Esophagus squamous epithelium (tissue), 5 donors: ENCODE measurements at regions of chr12 and their contacts with region 1.

Region 1: GRCh38 chr12:51341259-51342007 is 5.0 kb downstream of the CELA1 start:
- DNase-seq: no peak
- H3K4me3 ChIP-seq: peak overlapping the region in 3 of 4 donors; percentile 15 to 45 (median 21)
- H3K27ac ChIP-seq: peak overlapping the region in 1 of 4 donors; percentile 31
- H3K4me1 ChIP-seq: peaks cover 0 to 19% (median 9%) of the 10 kb centered on the region in 3 donors
- H3K27me3 ChIP-seq: no peaks in the 10 kb centered on the region
- CTCF ChIP-seq: peak; percentile 95 to 99 (median 98)
- POLR2A ChIP-seq: no peak

Region 2: GRCh38 chr12:51047655-51048540 is 293.5 kb before region 1 on chr12 and contains the start of gene LETMD1:
- intact Hi-C with region 1: no loop called
- DNase-seq: peak; percentile 79
- H3K4me3 ChIP-seq: peak within 1 kb of the TSS; percentile 76 to 83 (median 80)
- H3K27ac ChIP-seq: peak within 1 kb of the TSS; percentile 92 to 99 (median 97)
- H3K4me1 ChIP-seq: peaks cover 6 to 32% (median 16%) of the 10 kb centered on the region in 3 donors
- H3K27me3 ChIP-seq: no peaks in the 10 kb centered on the region
- CTCF ChIP-seq: peak; percentile 77 to 93 (median 90)
- POLR2A ChIP-seq: peak in 1 of 4 donors; percentile 75
- total RNA-seq, gene LETMD1: 19.1 to 55.3 (median 35.1) TPM

Region 3: DNA sequence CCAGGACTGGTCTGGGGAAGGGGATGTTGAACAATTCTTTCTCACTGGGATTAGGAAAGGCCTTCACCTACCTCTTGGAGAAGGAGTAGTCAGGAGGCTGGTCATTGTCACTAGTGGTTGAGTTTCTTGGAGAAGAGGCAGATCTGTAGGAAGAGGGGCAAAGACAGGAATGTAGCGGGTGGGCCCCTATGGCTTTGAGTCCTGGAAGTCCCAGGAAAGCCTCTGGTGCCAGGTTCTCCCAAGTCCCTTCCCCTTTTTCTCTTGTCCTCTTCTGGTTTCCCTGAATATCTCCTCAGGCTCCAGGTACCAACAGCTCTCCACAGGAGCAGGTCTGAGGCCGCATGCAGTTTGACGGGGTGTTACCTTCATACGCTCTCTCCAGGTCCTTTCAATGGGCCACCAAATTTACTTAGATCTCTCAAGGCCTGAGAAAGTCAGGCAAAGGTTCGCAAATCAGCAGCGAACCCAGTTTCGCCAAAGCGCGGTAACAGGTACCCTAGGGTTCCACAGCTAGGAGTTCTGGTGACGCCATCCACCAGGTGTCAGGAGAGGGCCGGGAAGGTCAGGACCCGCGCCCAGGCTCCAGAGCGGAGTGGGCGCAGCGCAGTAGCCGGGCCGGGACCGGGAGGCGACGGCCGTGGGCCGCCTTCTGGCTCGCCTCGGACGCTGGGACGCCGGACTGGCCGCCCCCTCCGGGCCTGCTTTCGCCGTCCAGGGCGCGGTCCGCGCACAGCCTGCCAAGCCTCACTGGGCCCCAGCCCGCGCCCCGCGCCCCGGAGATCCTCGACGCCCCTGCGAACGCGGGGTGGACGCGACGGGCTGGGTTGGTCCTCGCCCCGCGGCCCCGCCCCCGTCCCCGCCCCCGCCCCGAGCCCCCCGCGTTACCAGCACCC is 72.0 kb before region 1 on chr12:
- intact Hi-C with region 1: loop called (anchors 5 kb)
- DNase-seq: no peak
- H3K4me3 ChIP-seq: peak overlapping the region; percentile 56 to 96 (median 76)
- H3K27ac ChIP-seq: peak overlapping the region; percentile 89 to 94 (median 92)
- H3K4me1 ChIP-seq: peaks cover 2 to 58% (median 10%) of the 10 kb centered on the region in 3 donors
- H3K27me3 ChIP-seq: peaks cover 0 to 7% (median 0%) of the 10 kb centered on the region in 4 donors
- CTCF ChIP-seq: peak; percentile 31 to 71 (median 58)
- POLR2A ChIP-seq: no peak

Region 4: DNA sequence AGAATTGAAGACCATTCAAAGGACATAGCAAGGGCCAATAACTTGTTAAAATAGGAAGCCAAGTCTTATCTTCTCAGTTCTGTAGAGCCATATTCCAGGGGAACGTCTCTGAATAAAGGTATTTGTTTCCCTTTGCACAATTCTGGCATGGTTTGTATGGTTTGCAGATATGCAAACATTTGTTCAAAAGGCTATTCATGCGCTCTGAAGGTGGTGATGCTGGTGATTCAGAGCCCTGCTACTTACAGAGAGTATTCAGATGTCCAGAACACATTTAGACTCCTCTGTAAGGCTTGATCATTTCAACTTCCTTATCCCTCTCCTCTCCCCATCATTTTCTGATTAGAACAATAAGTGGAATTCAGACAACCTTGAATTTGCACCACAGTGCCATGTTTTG is 119.1 kb after region 1 on chr12:
- intact Hi-C with region 1: no loop called
- DNase-seq: no peak
- H3K4me3 ChIP-seq: no peak overlapping the region
- H3K27ac ChIP-seq: no peak overlapping the region
- H3K4me1 ChIP-seq: no peaks in the 10 kb centered on the region
- H3K27me3 ChIP-seq: peaks cover 0 to 5% (median 0%) of the 10 kb centered on the region in 4 donors
- CTCF ChIP-seq: no peak
- POLR2A ChIP-seq: no peak